GM23248 (cell line): ENCODE measurements at regions of chr1 and their contacts with region 1.

Region 1: DNA sequence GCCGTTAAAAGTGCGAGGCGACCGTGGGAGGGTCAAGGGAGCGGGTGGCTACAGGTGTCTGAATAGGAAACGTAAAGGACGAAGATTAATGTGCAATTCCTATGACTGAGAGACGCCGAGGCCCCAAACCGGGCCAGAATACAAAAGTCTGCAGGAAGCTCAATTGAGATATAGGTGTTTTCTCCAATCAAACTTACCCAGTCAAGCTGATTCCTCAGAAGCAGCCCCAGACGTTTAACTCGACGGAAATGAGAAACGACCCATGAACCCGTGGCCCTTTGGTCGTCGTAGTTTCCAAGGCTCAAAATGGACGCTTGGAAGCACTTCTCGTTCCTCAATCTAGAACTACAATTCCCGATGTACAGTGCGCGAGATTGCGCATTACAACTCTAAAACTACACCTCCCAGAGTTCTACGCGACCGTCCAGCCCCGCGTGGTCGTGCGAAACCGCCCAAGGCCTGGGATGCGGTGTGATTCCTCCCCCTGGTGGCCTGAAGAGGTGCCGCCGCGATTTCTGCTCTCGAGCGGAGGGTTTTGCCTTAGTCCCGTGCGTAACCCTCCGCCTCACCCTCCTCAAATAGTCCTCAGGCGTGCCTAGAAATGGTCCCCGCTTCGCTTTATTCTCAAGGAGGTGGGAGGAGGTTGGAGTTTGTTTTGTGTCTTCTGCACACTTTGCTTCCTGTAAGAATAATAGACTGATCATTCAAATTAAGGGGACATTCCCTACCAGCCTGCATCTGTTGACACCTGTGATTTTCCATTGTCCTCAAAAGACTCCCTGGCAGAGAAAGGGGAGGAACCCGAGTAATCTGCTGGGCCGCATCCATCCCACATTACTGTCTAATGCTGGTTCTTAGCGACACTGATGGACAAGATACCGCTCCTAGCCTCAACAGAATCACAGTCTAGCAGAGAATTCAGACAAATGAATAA is at the start of gene PAFAH2:
- DNase-seq: peak; percentile 100
- H3K4me3 ChIP-seq: peak within 1 kb of the TSS; percentile 84
- H3K27ac ChIP-seq: peak within 1 kb of the TSS; percentile 48
- H3K4me1 ChIP-seq: peaks cover 13% of the 10 kb centered on the region
- H3K27me3 ChIP-seq: no peaks in the 10 kb centered on the region
- total RNA-seq, gene PAFAH2: 10.7 and 11.9 TPM in 2 replicates

Region 2: DNA sequence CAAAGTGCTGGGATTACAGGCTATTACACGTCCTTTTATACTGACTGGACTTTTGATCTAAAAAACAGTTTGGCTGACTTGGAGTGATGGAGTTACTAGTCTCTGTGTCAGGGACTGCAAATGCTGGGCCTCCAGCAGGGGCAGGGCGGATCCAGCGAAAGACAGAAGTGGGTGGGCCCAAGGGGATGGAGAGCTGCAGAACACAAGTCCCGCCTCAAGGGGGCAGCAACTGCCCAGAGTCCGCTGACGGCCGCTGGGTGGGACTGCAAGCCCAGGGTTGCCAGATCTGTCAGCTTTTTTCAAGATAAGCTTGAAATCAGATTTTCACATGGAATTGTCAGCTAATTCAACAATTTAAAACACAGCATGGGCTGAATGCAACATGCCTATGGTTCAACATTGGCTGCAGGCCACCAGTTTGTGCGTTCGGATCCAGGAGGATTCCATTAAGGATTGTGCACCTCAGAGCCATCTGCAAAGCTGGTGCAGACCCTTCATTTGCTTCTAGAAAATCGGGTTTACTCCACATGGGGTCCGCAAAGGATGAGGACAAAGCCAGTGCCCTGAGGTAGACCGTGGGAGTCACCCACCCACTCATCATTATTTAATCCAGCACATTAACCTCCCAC is 102.6 kb before region 1 on chr1:
- in situ Hi-C with region 1: loop called (anchors 10 kb)
- DNase-seq: peak; percentile 96
- H3K4me3 ChIP-seq: no peak overlapping the region
- H3K27ac ChIP-seq: peak overlapping the region; percentile 32
- H3K4me1 ChIP-seq: peaks cover 45% of the 10 kb centered on the region
- H3K27me3 ChIP-seq: no peaks in the 10 kb centered on the region